ENCODE measurements at regions of chr16 and their contacts with region 1.

Region 1: GRCh38 chr16:81481207-81481821 is 36.7 kb downstream of the CMIP start:
- DNase-seq: peak; percentile 93
- CTCF ChIP-seq: no peak

Region 2: DNA sequence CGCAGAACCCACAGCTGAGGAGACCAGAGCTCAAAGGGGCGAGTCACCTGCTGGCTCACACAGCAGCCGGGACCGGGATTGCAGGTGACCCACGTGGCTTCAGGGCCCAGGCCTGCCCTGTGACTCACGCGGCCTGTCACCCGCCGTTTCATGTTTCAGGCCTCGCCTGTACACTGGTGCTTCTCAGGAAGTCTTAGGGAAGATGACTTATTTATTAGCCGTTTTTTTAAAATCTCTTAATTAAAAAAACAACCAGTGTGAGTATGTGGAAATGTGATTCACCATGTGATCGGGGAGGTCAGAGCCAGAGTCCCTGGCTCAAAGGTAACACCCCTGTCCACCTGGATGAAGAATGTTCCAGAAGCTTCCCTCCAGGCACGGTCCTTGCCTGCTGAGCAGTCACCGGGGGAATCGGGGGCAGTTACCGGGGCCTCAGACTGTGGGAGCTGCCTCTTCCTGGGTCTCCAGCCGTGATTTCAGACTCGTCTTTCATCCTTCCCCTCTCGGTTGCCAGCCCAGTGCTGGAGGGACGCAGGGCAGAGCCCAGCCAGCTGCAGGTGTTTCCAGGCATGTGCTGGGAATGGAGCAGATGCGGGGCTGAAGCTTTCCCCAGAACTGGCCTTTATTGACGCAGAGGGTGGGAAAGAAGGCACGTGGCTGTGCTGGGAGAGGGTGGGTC is 12.6 kb after region 1 on chr16:
- CTCF ChIA-PET with region 1: interaction called, 53 read pairs
- POLR2A ChIA-PET with region 1: interaction called, 4 read pairs
- DNase-seq: no peak
- CTCF ChIP-seq: no peak

Region 3: GRCh38 chr16:81600901-81601428 is 119.7 kb after region 1 on chr16:
- CTCF ChIA-PET with region 1: no interaction called
- POLR2A ChIA-PET with region 1: no interaction called
- DNase-seq: no peak
- CTCF ChIP-seq: no peak